CD14-positive monocyte (primary cell): ENCODE measurements at regions of chr3 and their contacts with region 1.

Region 1: DNA sequence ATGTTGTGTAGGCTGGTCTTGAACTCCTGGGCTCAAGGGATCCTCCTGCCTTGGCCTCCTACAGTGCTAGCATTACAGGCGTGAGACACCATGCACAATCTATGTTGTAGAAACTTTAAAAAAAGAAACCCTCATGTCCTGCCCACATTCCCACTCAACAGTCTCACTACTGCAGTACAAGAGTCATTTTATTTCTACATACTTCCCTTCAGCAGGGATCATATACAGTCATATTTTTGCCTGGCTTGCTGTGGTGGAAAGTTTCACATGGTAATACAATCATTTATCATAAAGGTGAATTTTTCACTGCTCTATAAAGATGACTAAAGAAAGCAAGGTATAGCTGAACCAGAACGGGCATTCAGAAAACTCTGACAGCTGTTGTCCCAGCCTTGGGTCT is 53.8 kb upstream of the PIK3CB start:
- DNase-seq: peak; percentile 25 to 56 (median 30)
- H3K4me3 ChIP-seq: peak overlapping the region in 1 of 3 experiments; percentile 17
- H3K4me3 Mint-ChIP-seq: no peak overlapping the region
- H3K27ac ChIP-seq: peak overlapping the region; percentile 56 to 98
- H3K27ac Mint-ChIP-seq: peak overlapping the region; percentile 88 to 98 (median 94)
- H3K4me1 ChIP-seq: peaks cover 51 to 52% of the 10 kb centered on the region in 2 donors
- H3K4me1 Mint-ChIP-seq: peaks cover 47% of the 10 kb centered on the region
- H3K27me3 ChIP-seq: no peaks in the 10 kb centered on the region
- H3K27me3 Mint-ChIP-seq: peaks cover 0 to 2% (median 0%) of the 10 kb centered on the region in 3 donors
- CTCF ChIP-seq: no peak

Region 2: DNA sequence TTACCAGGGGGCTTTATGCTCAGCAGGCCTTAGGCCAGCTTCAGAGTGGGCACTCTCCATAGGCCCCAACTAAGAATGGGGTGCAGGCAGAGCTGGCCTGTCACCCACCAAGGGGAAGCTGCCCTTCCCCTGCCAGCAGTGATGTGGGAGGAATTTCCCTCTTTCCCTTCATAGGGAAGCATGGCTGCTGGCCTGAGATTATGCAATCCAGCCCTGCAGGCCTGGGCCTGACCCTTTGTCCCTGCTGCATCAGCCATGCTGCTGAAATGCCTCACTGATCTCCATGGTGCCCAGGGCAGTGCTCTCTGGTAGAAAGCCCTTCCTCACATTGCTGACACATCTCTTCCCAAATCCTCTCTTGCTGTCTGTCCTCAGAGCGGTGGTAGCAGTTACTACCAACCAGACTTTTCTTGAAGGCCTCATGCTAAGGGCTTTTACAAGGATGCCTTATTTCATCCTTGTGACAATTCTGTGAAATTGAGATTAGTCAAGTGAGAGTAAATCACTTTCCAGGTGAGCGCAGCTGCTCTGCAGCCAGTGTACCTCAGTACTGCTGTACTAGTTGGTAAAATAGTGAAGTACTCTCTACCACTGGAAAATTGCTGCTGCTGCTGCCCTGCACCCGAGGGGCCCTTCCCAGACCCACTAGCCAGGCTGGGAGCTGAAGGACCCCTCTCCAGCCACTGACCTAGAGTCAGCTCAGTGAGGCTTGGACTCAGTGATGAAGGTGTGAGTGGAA is 506.4 kb before region 1 on chr3:
- intact Hi-C with region 1: no loop called
- DNase-seq: peak; percentile 59 to 91 (median 64)
- H3K4me3 ChIP-seq: peak overlapping the region in 1 of 3 experiments; percentile 11
- H3K4me3 Mint-ChIP-seq: peak overlapping the region in 1 of 2 donors; percentile 8
- H3K27ac ChIP-seq: peak overlapping the region; percentile 9 to 69
- H3K27ac Mint-ChIP-seq: peak overlapping the region in 6 of 7 donors; percentile 60 to 86 (median 79)
- H3K4me1 ChIP-seq: peaks cover 13 to 17% of the 10 kb centered on the region in 2 donors
- H3K4me1 Mint-ChIP-seq: peaks cover 15% of the 10 kb centered on the region
- H3K27me3 ChIP-seq: no peaks in the 10 kb centered on the region
- H3K27me3 Mint-ChIP-seq: peaks cover 0 to 4% (median 0%) of the 10 kb centered on the region in 3 donors
- CTCF ChIP-seq: no peak

Region 3: DNA sequence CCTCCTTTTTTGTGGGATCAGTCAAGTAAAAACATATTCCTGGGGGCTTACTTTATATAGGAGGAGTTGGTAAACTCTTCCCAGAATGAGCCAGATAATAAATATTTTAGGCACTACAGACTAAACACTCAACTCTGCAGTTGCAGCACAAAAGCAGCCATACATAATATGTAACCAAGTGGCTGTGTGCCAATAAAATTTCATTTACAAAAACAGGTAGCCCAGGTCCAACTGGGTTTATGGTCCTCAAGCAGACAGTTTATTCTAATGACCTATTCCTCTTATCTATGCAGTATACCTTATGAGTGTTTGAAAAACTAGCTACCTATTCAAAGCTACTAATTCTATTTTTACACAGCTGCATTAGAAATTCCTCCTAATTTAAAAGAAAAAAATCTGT is 218.2 kb before region 1 on chr3:
- intact Hi-C with region 1: no loop called
- DNase-seq: no peak
- H3K4me3 ChIP-seq: no peak overlapping the region
- H3K4me3 Mint-ChIP-seq: no peak overlapping the region
- H3K27ac ChIP-seq: no peak overlapping the region
- H3K27ac Mint-ChIP-seq: no peak overlapping the region
- H3K4me1 ChIP-seq: no peaks in the 10 kb centered on the region
- H3K4me1 Mint-ChIP-seq: no peaks in the 10 kb centered on the region
- H3K27me3 ChIP-seq: no peaks in the 10 kb centered on the region
- H3K27me3 Mint-ChIP-seq: no peaks in the 10 kb centered on the region
- CTCF ChIP-seq: no peak

Region 4: DNA sequence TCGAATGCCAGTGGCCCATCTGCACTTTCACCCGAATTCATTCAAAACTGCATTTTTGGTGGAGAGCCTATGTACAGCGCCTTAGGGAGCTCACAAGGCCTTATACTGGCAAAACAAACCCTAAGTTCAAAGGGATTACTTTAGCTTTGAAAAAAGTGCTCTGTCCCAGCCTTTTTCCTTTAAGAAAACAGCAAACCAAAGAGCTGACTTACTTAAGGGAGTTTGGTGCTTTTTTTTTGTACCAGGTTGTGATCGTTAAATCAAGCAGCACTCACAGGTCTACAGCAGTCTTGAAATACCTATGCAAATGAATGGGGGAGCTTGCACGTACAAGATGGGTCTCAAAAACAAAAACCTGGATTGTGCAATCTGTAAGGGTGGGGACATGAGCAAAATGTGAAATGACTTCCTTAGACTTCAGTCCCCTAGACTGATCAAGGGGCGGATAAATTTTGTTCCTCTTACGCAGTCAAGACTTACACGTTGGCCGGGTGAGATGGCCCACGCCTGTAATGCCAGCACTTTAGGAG is 42.2 kb before region 1 on chr3:
- intact Hi-C with region 1: loop called in 1 of 2 experiments (anchors 5 kb)
- DNase-seq: peak; percentile 40 to 72 (median 52)
- H3K4me3 ChIP-seq: peak overlapping the region in 1 of 3 experiments; percentile 12
- H3K4me3 Mint-ChIP-seq: peak overlapping the region in 1 of 2 donors; percentile 77
- H3K27ac ChIP-seq: peak overlapping the region in 1 of 2 donors; percentile 66
- H3K27ac Mint-ChIP-seq: peak overlapping the region; percentile 14 to 82 (median 74)
- H3K4me1 ChIP-seq: peaks cover 47 to 52% of the 10 kb centered on the region in 2 donors
- H3K4me1 Mint-ChIP-seq: peaks cover 43% of the 10 kb centered on the region
- H3K27me3 ChIP-seq: no peaks in the 10 kb centered on the region
- H3K27me3 Mint-ChIP-seq: peaks cover 0 to 2% (median 1%) of the 10 kb centered on the region in 3 donors
- CTCF ChIP-seq: no peak